Right ventricle myocardium superior (tissue), 1 donor: ENCODE measurements at regions of chr4 and their contacts with region 1.

Region 1: GRCh38 chr4:154854362-154854761 is 73.3 kb downstream of the RBM46 start:
- DNase-seq: no peak
- ATAC-seq: no peak

Region 2: GRCh38 chr4:155353923-155354540 is 499.7 kb after region 1 on chr4:
- intact Hi-C with region 1: loop called (anchors 5 kb)
- DNase-seq: peak; percentile 82
- ATAC-seq: peak; percentile 91